ENCODE measurements at regions of chr1 and their contacts with region 1.

Region 1: GRCh38 chr1:226332947-226333346 is 24.0 kb upstream of the LIN9 start:
- DNase-seq: peak; percentile 35
- H3K4me3 ChIP-seq: peak overlapping the region in 1 of 2 experiments; percentile 29; a peak in 2 of 4 replicates
- H3K27ac ChIP-seq: peak overlapping the region in 1 of 2 experiments; percentile 31; a peak in 1 of 4 replicates
- H3K4me1 ChIP-seq: peaks cover 0 to 2% of the 10 kb centered on the region in 2 experiments; a peak in 2 of 4 replicates
- H3K27me3 ChIP-seq: no peaks in the 10 kb centered on the region
- CTCF ChIP-seq: no peak
- EP300 ChIP-seq: 0 out of 4 replicates have a peak, but pooled peaks of 1 of the 2 experiments have one; percentile 8
- RAD21 ChIP-seq: no peak

Region 2: GRCh38 chr1:226308723-226309315 is 24.1 kb before region 1 on chr1 and contains the start of gene LIN9:
- CTCF ChIA-PET with region 1: interaction called, 14 read pairs
- POLR2A ChIA-PET with region 1: interaction called, 7 read pairs
- DNase-seq: peak; percentile 95
- H3K4me3 ChIP-seq: peak within 1 kb of the TSS; percentile 93 to 95
- H3K27ac ChIP-seq: peak within 1 kb of the TSS; percentile 64 to 83
- H3K4me1 ChIP-seq: peaks cover 0 to 8% of the 10 kb centered on the region in 2 experiments; a peak in 3 of 4 replicates
- H3K27me3 ChIP-seq: no peaks in the 10 kb centered on the region
- CTCF ChIP-seq: peak; percentile 12; the same call in 1 of the 2 replicates
- EP300 ChIP-seq: no peak
- RAD21 ChIP-seq: no peak
- polyA plus RNA-seq, gene LIN9: 1.7 and 2.5 TPM in 2 replicates

Measured in SK-N-SH (cell line).